ENCODE measurements at regions of chr17 and their contacts with region 1.

Region 1: DNA sequence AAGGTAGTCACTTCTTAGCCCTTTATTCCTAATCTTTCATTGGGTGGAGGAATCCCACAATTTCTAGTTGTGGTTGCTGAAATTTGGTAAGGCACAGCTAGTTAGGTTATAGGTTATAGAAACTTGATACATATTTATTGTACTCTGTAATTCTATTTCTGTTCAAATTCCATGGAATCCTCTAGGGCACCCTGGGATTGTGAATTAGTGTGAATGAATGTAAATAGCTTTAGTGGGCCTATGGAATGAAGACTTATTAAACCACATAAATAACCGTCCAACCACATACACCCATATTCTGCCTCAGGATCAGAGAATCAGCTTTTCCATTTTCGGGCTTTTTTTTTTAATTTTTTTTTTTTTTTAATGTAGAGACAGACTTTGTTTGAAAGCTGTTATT is 9.2 kb downstream of the TANC2 start:
- DNase-seq: no peak
- ATAC-seq: no peak
- H3K4me3 ChIP-seq: no peak overlapping the region
- H3K27ac ChIP-seq: no peak overlapping the region
- H3K4me1 ChIP-seq: no peaks in the 10 kb centered on the region
- H3K27me3 ChIP-seq: no peaks in the 10 kb centered on the region
- CTCF ChIP-seq: no peak
- POLR2A ChIP-seq: no peak

Region 2: DNA sequence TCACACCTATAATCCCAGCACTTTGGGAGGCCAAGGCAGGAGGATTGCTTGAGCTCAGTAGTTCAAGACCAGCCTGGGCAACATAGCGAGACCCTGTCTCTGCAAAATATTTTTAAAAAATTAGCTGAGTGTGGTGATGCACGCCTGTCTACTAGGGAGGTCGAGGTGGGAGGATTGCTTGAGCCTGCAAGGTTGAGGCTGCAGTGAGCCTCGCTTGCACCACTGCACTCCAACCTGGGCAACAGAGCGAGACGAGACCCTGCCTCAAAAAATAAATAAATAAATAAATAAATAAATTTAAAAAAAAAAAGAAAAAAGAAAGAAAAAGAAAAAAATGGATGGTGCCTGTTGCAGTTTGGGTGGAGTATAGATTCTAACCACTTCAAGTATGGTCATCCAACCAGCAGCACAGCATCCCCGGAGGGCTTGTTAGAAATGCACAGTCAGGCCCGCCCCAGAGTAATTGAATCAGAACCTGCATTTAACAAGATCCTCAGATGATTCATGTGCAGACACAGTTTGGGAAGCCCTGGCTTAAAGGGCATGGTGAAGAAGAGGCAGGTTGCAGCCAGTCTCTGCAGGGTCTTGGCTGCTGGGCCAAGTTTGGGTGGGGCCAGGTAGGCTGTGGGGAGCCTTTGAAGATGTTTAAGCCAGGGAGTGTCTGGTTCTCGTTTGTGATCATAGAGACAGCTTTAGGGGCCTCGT is 307.0 kb before region 1 on chr17:
- in situ Hi-C with region 1: no loop called
- intact Hi-C with region 1: no loop called
- DNase-seq: no peak
- ATAC-seq: no peak
- H3K4me3 ChIP-seq: no peak overlapping the region
- H3K27ac ChIP-seq: no peak overlapping the region
- H3K4me1 ChIP-seq: no peaks in the 10 kb centered on the region
- H3K27me3 ChIP-seq: no peaks in the 10 kb centered on the region
- CTCF ChIP-seq: no peak
- POLR2A ChIP-seq: no peak

Region 3: DNA sequence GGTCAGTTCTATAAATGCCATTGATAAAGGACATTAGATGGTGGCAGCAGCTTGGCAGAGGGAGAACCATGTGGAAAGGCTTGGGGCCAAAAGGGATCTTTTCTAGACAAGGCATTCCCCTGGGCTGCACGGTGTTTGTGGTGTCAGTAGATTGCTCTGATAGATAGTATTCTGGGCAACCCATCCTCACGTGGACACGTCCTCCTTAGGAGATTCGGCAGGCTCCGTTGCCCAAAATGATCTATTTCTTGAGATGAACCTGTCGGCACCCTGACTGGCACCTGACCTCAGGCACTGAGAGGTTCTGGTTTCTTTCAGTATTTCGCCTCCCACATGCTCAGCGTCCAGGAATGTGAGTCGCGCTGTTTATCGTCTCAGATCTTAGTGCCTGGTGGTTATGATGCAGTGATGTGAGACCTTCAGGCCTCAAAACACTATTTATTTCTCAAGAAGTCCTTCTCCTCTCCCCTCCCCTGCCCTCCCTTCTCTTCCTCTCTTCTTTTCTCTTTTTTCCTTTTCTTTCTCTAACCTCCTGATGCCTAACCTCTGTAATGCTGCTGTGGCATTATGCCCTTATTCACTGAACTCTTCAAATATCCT is 256.7 kb before region 1 on chr17:
- in situ Hi-C with region 1: loop called in 3 of 4 experiments (anchors 10 to 25 kb)
- intact Hi-C with region 1: no loop called
- DNase-seq: no peak
- ATAC-seq: no peak
- H3K4me3 ChIP-seq: no peak overlapping the region
- H3K27ac ChIP-seq: no peak overlapping the region
- H3K4me1 ChIP-seq: no peaks in the 10 kb centered on the region
- H3K27me3 ChIP-seq: no peaks in the 10 kb centered on the region
- CTCF ChIP-seq: no peak
- POLR2A ChIP-seq: no peak

Region 4: GRCh38 chr17:63332286-63332685 is 357.1 kb after region 1 on chr17:
- in situ Hi-C with region 1: no loop called
- intact Hi-C with region 1: no loop called
- DNase-seq: no peak
- ATAC-seq: no peak
- H3K4me3 ChIP-seq: no peak overlapping the region
- H3K27ac ChIP-seq: no peak overlapping the region
- H3K4me1 ChIP-seq: no peaks in the 10 kb centered on the region
- H3K27me3 ChIP-seq: no peaks in the 10 kb centered on the region
- CTCF ChIP-seq: no peak
- POLR2A ChIP-seq: no peak

Measured in gastrocnemius medialis (tissue), 4 donors.